ENCODE measurements at regions of chr3 and their contacts with region 1.

Region 1: DNA sequence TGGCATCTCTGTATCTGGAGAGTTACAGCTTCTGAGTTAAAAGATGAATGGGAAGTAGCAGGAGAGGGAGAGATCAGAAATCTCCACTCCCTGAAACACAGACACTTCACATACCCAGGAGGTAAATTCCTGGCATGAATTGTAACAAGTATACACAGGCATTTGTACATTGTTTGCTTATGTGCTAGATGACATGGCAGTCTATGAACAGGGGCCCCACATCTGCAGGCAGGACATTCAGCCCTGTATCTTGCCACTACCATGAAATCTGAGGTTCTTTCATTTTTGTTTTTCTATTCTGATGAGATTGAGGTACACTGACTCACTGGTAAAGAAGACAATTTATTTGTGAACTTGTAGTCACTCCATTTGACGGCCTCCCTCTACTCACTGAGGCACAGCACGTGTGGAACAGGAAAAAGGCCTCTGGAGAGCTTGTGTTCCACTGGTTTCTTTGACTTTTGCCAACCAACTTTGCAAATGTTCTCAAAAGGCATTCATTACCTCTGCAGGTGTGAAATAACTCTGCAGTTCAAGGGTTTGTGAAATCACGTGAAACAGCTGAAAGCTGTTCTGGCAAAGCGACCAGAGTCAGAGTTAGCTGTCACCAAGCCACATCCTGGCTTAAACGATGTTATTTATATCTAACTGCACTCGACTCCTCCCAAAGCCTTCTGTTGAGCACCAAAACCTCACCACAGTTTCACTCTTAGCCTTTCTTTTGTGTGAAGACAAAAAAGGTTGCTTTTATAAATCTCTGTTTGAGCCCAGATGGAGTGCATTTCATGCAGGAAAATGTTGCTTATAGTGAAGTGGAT is 401.3 kb upstream of the CFAP20DC start:
- DNase-seq: peak; percentile 26 to 90 (median 58)
- ATAC-seq: peak; percentile 90
- H3K4me3 ChIP-seq: peak overlapping the region in 1 of 2 experiments; percentile 22
- H3K4me3 Mint-ChIP-seq: peak overlapping the region; percentile 72
- H3K27ac ChIP-seq: peak overlapping the region; percentile 73 to 84
- H3K27ac Mint-ChIP-seq: peak overlapping the region; percentile 96
- H3K4me1 ChIP-seq: peaks cover 56% of the 10 kb centered on the region
- H3K4me1 Mint-ChIP-seq: peaks cover 81% of the 10 kb centered on the region
- H3K27me3 ChIP-seq: no peaks in the 10 kb centered on the region
- H3K27me3 Mint-ChIP-seq: no peaks in the 10 kb centered on the region
- CTCF ChIP-seq: no peak

Region 2: GRCh38 chr3:59424268-59425010 is 26.7 kb before region 1 on chr3:
- CTCF ChIA-PET with region 1: interaction called, 7 read pairs
- POLR2A ChIA-PET with region 1: interaction called, 4 read pairs
- intact Hi-C with region 1: loop called in 1 of 2 experiments (anchors 2 kb)
- DNase-seq: peak in 5 of 9 experiments; percentile 20 to 65 (median 29)
- ATAC-seq: peak; percentile 45
- H3K4me3 ChIP-seq: no peak overlapping the region
- H3K4me3 Mint-ChIP-seq: peak overlapping the region; percentile 20
- H3K27ac ChIP-seq: no peak overlapping the region
- H3K27ac Mint-ChIP-seq: peak overlapping the region; percentile 66
- H3K4me1 ChIP-seq: peaks cover 42% of the 10 kb centered on the region
- H3K4me1 Mint-ChIP-seq: peaks cover 47% of the 10 kb centered on the region
- H3K27me3 ChIP-seq: no peaks in the 10 kb centered on the region
- H3K27me3 Mint-ChIP-seq: no peaks in the 10 kb centered on the region
- CTCF ChIP-seq: no peak

Region 3: DNA sequence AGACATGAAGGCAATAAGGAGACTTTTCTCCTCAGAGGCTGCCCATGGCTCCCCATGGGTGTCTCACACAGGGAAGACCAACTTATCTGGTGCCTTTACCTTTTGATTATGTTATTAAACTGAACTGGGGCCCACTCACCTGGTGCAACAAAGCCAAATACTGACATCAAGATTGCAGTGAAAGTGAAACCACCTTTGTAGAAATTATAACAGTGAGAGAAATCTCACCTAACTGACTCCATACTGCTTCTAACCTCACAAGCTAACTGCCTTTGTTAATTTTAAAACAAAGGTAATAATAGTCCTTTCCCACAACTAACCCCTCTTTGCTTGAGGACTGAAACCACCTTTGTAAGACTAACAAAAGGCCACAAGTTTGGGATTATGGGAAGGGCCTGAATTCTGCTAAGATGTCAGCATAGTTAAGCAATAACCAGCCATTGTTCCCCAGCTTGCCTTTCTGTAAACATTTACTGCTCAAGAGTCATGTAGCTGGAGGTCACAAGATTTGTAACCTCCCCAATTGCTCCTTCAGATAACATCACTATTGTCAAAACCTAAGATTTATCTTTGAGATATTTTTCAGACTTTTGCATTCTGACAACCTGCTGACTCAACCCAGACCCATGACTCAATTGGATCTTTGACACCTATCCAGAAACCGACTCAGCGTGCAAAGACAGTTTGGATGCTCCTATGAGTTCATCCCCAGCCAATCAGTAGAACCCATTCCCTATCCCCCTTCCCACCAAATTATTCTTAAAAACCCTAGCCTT is 19.0 kb after region 1 on chr3:
- CTCF ChIA-PET with region 1: no interaction called
- POLR2A ChIA-PET with region 1: interaction called, 4 read pairs
- intact Hi-C with region 1: loop called in 1 of 2 experiments (anchors 2 kb)
- DNase-seq: no peak
- ATAC-seq: no peak
- H3K4me3 ChIP-seq: no peak overlapping the region
- H3K4me3 Mint-ChIP-seq: no peak overlapping the region
- H3K27ac ChIP-seq: no peak overlapping the region
- H3K27ac Mint-ChIP-seq: no peak overlapping the region
- H3K4me1 ChIP-seq: peaks cover 6% of the 10 kb centered on the region
- H3K4me1 Mint-ChIP-seq: peaks cover 31% of the 10 kb centered on the region
- H3K27me3 ChIP-seq: no peaks in the 10 kb centered on the region
- H3K27me3 Mint-ChIP-seq: no peaks in the 10 kb centered on the region
- CTCF ChIP-seq: no peak

Region 4: DNA sequence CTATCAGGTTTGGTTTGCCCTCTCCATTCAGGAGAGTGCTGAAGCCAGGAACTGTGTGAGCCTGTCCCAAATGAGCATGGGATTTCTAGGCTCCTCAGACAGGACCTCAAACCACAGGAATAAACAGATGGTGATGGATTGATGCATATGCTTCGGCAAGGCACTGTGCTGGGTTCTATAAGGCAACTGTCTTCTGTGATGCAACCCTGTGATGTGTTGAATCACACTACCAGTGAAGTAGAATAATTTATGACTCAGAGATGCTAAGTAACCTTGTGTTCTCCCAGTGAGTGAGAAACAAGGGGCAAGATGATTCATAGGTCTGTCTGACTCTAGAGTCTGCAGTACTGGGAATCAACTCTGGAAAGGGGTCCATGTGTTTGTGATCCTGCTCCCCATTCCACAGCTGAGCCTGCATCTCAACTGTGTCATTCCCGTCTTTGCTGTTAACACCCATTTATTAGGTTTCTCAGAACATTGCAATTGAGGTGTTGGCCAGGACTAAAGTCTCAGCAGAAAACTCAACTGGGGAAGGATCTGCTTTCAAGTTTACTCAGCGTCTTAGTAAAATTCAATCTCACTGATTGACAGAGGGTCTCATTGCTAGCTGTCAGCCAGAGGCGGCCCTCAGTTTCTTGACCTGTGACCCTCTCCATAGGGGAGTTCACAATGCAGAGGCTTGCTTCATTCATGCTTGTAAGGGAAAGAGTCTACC is 108.7 kb after region 1 on chr3:
- CTCF ChIA-PET with region 1: no interaction called
- POLR2A ChIA-PET with region 1: no interaction called
- intact Hi-C with region 1: no loop called
- DNase-seq: no peak
- ATAC-seq: no peak
- H3K4me3 ChIP-seq: no peak overlapping the region
- H3K4me3 Mint-ChIP-seq: no peak overlapping the region
- H3K27ac ChIP-seq: no peak overlapping the region
- H3K27ac Mint-ChIP-seq: no peak overlapping the region
- H3K4me1 ChIP-seq: no peaks in the 10 kb centered on the region
- H3K4me1 Mint-ChIP-seq: peaks cover 10% of the 10 kb centered on the region
- H3K27me3 ChIP-seq: no peaks in the 10 kb centered on the region
- H3K27me3 Mint-ChIP-seq: no peaks in the 10 kb centered on the region
- CTCF ChIP-seq: no peak

Region 5: DNA sequence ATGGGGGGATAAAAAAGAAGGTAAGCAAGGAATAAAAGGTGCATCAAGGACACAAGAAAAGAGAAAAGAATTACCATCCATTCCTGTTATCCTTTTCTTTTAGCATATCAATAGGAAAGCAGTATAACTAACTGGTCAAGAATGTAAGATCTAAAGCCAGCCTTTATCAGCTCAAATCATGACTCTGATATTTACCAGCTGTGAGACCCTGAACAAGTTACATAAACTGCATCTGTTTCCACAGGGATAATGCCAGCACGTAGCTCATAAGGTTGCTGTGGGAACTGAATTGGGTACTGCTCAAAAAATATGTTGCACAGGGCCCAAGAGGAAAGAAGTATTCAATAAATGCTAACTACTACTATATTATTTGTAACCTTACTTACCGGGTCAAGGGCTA is 690.9 kb after region 1 on chr3:
- CTCF ChIA-PET with region 1: no interaction called
- POLR2A ChIA-PET with region 1: no interaction called
- intact Hi-C with region 1: no loop called
- DNase-seq: no peak
- ATAC-seq: no peak
- H3K4me3 ChIP-seq: no peak overlapping the region
- H3K4me3 Mint-ChIP-seq: no peak overlapping the region
- H3K27ac ChIP-seq: no peak overlapping the region
- H3K27ac Mint-ChIP-seq: no peak overlapping the region
- H3K4me1 ChIP-seq: no peaks in the 10 kb centered on the region
- H3K4me1 Mint-ChIP-seq: peaks cover under 1% of the 10 kb centered on the region
- H3K27me3 ChIP-seq: no peaks in the 10 kb centered on the region
- H3K27me3 Mint-ChIP-seq: no peaks in the 10 kb centered on the region
- CTCF ChIP-seq: no peak

Region 6: GRCh38 chr3:60650171-60650570 is 1199.0 kb after region 1 on chr3:
- CTCF ChIA-PET with region 1: no interaction called
- POLR2A ChIA-PET with region 1: no interaction called
- intact Hi-C with region 1: no loop called
- DNase-seq: no peak
- ATAC-seq: no peak
- H3K4me3 ChIP-seq: no peak overlapping the region
- H3K4me3 Mint-ChIP-seq: no peak overlapping the region
- H3K27ac ChIP-seq: no peak overlapping the region
- H3K27ac Mint-ChIP-seq: no peak overlapping the region
- H3K4me1 ChIP-seq: no peaks in the 10 kb centered on the region
- H3K4me1 Mint-ChIP-seq: no peaks in the 10 kb centered on the region
- H3K27me3 ChIP-seq: no peaks in the 10 kb centered on the region
- H3K27me3 Mint-ChIP-seq: no peaks in the 10 kb centered on the region
- CTCF ChIP-seq: no peak

Region 7: DNA sequence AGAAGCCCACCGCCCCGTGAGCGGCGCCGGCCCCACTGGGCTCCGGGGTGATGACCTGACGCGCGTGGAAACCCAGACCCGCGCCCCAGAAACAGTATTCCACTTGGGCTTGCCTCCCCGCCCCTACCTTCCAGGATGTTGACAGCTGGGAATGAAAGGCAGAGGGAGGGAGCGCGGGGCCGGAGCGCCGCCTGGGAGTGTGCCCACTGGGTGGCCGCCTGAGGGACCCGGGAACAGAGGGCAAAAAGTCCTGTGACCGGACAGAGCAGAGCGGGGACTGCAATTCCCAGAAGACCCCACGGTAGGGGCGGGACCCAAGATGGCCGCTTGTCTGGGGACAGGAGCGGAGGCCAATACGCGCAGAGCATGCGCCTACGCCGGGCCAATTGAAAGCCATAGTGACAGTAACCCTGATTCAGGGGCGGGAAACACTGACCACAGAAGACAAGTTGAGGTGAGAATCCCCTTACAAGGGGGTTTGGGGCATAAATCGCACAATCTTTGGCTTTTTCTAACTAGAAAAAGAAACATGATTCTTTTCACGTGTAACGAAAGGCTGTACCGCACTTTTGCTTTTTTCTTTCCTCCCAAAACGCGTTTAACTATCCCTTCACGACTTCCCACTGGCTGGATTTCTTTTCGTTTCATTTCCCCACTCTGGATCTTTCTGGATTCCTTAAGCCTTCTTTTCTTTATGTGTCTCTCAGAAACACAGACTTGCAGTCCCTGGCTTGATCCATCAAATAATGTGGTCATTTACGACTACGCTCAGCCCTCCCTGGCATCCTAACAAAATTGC is 1800.2 kb after region 1 on chr3 and contains the start of gene FHIT:
- CTCF ChIA-PET with region 1: no interaction called
- POLR2A ChIA-PET with region 1: no interaction called
- intact Hi-C with region 1: loop called in 1 of 2 experiments (anchors 5 kb)
- DNase-seq: peak; percentile 79 to 93 (median 89)
- ATAC-seq: peak; percentile 91
- H3K4me3 ChIP-seq: peak within 1 kb of the TSS; percentile 65 to 72
- H3K4me3 Mint-ChIP-seq: peak within 1 kb of the TSS; percentile 88
- H3K27ac ChIP-seq: peak within 1 kb of the TSS; percentile 15 to 65
- H3K27ac Mint-ChIP-seq: peak within 1 kb of the TSS; percentile 82
- H3K4me1 ChIP-seq: peaks cover 17% of the 10 kb centered on the region
- H3K4me1 Mint-ChIP-seq: peaks cover 20% of the 10 kb centered on the region
- H3K27me3 ChIP-seq: no peaks in the 10 kb centered on the region
- H3K27me3 Mint-ChIP-seq: peaks cover 3% of the 10 kb centered on the region
- CTCF ChIP-seq: no peak
- total RNA-seq, gene FHIT: 7.6 to 8.1 TPM